ENCODE measurements at regions of chrX and their contacts with region 1.

Region 1: DNA sequence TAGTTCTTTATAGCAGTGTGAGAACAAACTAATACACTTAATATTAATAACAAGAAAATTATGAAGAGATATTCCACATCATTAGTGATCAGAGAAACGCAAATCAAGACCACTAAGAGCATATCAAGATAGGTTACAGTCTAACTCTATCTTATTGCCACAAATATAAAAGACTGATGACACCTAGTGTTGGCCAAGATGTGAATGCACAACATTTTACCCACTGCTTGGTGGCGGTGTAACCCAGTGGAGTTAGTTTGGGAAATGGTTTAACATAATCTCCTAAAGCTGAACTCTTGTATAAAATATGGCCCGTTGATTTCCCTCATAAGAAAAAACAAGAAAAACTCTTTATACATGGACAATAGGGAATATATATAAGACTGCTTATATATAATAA is 92.4 kb downstream of the SLITRK2 start:
- DNase-seq: no peak
- ATAC-seq: no peak
- H3K4me3 ChIP-seq: no peak overlapping the region
- H3K27ac ChIP-seq: no peak overlapping the region
- H3K4me1 ChIP-seq: no peaks in the 10 kb centered on the region
- H3K27me3 ChIP-seq: no peaks in the 10 kb centered on the region

Region 2: DNA sequence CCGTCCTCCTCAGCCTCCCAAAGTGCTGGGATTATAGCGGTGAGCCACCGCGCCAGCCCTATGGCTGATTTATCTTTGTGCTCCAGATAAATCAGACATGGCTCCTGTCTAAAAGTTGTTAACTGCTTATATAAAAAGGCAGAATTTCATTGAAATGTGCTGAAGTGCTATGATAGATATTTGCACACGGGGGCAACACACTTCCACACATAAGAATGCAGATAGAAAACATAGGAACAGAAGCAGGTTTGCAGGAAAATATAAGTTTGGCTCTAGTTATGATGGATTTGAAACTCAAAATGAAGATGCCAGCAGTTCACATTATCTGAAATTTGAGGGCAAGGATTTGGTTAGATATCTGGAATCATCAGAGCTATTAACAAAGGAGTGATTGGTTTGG is 255.5 kb before region 1 on chrX:
- intact Hi-C with region 1: no loop called
- DNase-seq: no peak
- ATAC-seq: no peak
- H3K4me3 ChIP-seq: no peak overlapping the region
- H3K27ac ChIP-seq: no peak overlapping the region
- H3K4me1 ChIP-seq: no peaks in the 10 kb centered on the region
- H3K27me3 ChIP-seq: no peaks in the 10 kb centered on the region

Region 3: GRCh38 chrX:145825896-145826295 is 84.1 kb before region 1 on chrX:
- intact Hi-C with region 1: loop called in 2 of 4 experiments (anchors 10 kb)
- DNase-seq: no peak
- ATAC-seq: no peak
- H3K4me3 ChIP-seq: no peak overlapping the region
- H3K27ac ChIP-seq: no peak overlapping the region
- H3K4me1 ChIP-seq: no peaks in the 10 kb centered on the region
- H3K27me3 ChIP-seq: no peaks in the 10 kb centered on the region

Measured in right cardiac atrium (tissue), 5 donors.